ENCODE measurements at regions of chr10 and their contacts with region 1.

Region 1: GRCh38 chr10:73096449-73097304 is at the start of gene P4HA1:
- DNase-seq: peak; percentile 98
- H3K4me3 Mint-ChIP-seq: peak within 1 kb of the TSS; percentile 92
- H3K27ac Mint-ChIP-seq: peak within 1 kb of the TSS; percentile 88
- H3K4me1 Mint-ChIP-seq: peaks cover 29% of the 10 kb centered on the region
- H3K27me3 Mint-ChIP-seq: no peaks in the 10 kb centered on the region
- total RNA-seq, gene P4HA1: 48.1 to 49.2 TPM

Region 2: GRCh38 chr10:73060738-73061635 is 35.7 kb before region 1 on chr10:
- CTCF ChIA-PET with region 1: interaction called, 27 read pairs
- POLR2A ChIA-PET with region 1: interaction called, 3 read pairs
- DNase-seq: no peak
- H3K4me3 Mint-ChIP-seq: no peak overlapping the region
- H3K27ac Mint-ChIP-seq: no peak overlapping the region
- H3K4me1 Mint-ChIP-seq: peaks cover 15% of the 10 kb centered on the region
- H3K27me3 Mint-ChIP-seq: no peaks in the 10 kb centered on the region

Region 3: GRCh38 chr10:73110345-73110849 is 13.7 kb after region 1 on chr10 and contains the start of gene NUDT13:
- CTCF ChIA-PET with region 1: interaction called, 65 read pairs
- POLR2A ChIA-PET with region 1: interaction called, 35 read pairs
- DNase-seq: peak; percentile 46
- H3K4me3 Mint-ChIP-seq: peak within 1 kb of the TSS; percentile 80
- H3K27ac Mint-ChIP-seq: peak within 1 kb of the TSS; percentile 81
- H3K4me1 Mint-ChIP-seq: peaks cover 13% of the 10 kb centered on the region
- H3K27me3 Mint-ChIP-seq: no peaks in the 10 kb centered on the region
- total RNA-seq, gene NUDT13: 1.5 to 1.6 TPM

Region 4: GRCh38 chr10:73159038-73159648 is 62.5 kb after region 1 on chr10:
- CTCF ChIA-PET with region 1: interaction called, 59 read pairs
- POLR2A ChIA-PET with region 1: interaction called, 4 read pairs
- DNase-seq: peak; percentile 66
- H3K4me3 Mint-ChIP-seq: no peak overlapping the region
- H3K27ac Mint-ChIP-seq: no peak overlapping the region
- H3K4me1 Mint-ChIP-seq: peaks cover 33% of the 10 kb centered on the region
- H3K27me3 Mint-ChIP-seq: no peaks in the 10 kb centered on the region

Region 5: GRCh38 chr10:73246783-73247508 is 150.3 kb after region 1 on chr10 and contains the start of gene DNAJC9:
- CTCF ChIA-PET with region 1: interaction called, 4 read pairs
- POLR2A ChIA-PET with region 1: interaction called, 30 read pairs
- DNase-seq: peak; percentile 98
- H3K4me3 Mint-ChIP-seq: peak within 1 kb of the TSS; percentile 99
- H3K27ac Mint-ChIP-seq: peak within 1 kb of the TSS; percentile 95
- H3K4me1 Mint-ChIP-seq: peaks cover 71% of the 10 kb centered on the region
- H3K27me3 Mint-ChIP-seq: no peaks in the 10 kb centered on the region
- total RNA-seq, gene DNAJC9: 46.9 to 49.6 TPM

Measured in activated CD4-positive, alpha-beta memory T cell treated with anti-CD3 and anti-CD28 coated beads, Interleukin-2, amount 10 ng/mL, durations not matched to agents 7 days and 5 days (primary cell).